ENCODE measurements at regions of chr2 and their contacts with region 1.

Region 1: GRCh38 chr2:102753563-102754159 is 8.2 kb upstream of the TMEM182 start:
- DNase-seq: peak in 4 of 9 experiments; percentile 25 to 57 (median 32)
- ATAC-seq: peak; percentile 38
- H3K4me3 ChIP-seq: no peak overlapping the region
- H3K4me3 Mint-ChIP-seq: no peak overlapping the region
- H3K27ac ChIP-seq: no peak overlapping the region
- H3K27ac Mint-ChIP-seq: no peak overlapping the region
- H3K4me1 ChIP-seq: no peaks in the 10 kb centered on the region
- H3K4me1 Mint-ChIP-seq: no peaks in the 10 kb centered on the region
- H3K27me3 ChIP-seq: no peaks in the 10 kb centered on the region
- H3K27me3 Mint-ChIP-seq: no peaks in the 10 kb centered on the region
- CTCF ChIP-seq: peak; percentile 98

Region 2: GRCh38 chr2:102301867-102302362 is 451.7 kb before region 1 on chr2:
- CTCF ChIA-PET with region 1: no interaction called
- POLR2A ChIA-PET with region 1: no interaction called
- intact Hi-C with region 1: no loop called
- DNase-seq: peak; percentile 5 to 79 (median 41)
- ATAC-seq: peak; percentile 85
- H3K4me3 ChIP-seq: no peak overlapping the region
- H3K4me3 Mint-ChIP-seq: peak overlapping the region; percentile 38
- H3K27ac ChIP-seq: no peak overlapping the region
- H3K27ac Mint-ChIP-seq: no peak overlapping the region
- H3K4me1 ChIP-seq: peaks cover 6% of the 10 kb centered on the region
- H3K4me1 Mint-ChIP-seq: peaks cover 12% of the 10 kb centered on the region
- H3K27me3 ChIP-seq: no peaks in the 10 kb centered on the region
- H3K27me3 Mint-ChIP-seq: no peaks in the 10 kb centered on the region
- CTCF ChIP-seq: peak; percentile 50

Region 3: DNA sequence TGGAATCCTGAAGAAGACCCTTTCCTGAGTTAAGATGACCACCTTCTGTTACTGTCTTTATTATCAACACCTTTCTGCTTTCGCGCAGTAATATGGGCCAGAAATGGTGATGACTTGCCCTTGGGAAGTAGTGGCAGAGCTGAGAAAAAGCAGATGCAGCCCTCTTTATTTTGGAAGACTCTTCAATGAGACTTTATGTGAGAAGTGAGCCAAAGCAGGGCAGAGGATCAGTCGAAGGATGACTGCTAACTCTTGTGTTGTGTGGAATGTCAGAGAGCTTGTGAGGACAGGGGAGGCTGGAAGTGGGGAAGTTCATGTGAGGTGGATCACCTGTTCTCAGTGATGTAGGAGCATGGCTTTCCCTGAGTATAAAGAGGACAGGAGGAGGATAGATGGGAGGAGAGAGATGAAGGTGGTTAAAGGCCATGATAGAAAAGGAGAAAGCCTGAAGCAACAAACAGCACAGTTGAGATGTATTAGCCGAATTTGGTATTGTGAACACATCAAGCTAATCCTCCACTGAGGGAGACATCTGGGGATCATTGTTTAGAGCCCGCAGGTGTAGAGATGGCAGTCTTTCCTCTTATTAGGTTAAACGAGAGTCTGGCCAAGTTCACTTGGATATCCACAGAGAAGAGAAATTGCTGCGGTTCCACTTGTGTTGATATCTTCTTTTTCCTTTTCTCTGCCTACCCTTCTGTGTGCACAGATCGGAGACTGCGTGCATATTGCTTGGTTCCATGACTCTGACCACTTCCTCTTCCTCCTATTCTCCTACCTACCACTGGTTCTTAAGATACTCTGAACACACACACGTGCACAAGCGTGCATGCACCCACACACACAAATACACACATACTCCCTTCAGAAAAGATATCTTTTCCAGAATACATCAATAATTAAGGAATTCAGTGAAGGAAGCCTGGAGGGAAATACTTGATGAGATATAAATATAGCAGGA is 66.9 kb before region 1 on chr2:
- CTCF ChIA-PET with region 1: no interaction called
- POLR2A ChIA-PET with region 1: no interaction called
- intact Hi-C with region 1: no loop called
- DNase-seq: peak in 2 of 9 experiments; percentile 13 to 49
- ATAC-seq: no peak
- H3K4me3 ChIP-seq: no peak overlapping the region
- H3K4me3 Mint-ChIP-seq: no peak overlapping the region
- H3K27ac ChIP-seq: no peak overlapping the region
- H3K27ac Mint-ChIP-seq: no peak overlapping the region
- H3K4me1 ChIP-seq: peaks cover 10% of the 10 kb centered on the region
- H3K4me1 Mint-ChIP-seq: no peaks in the 10 kb centered on the region
- H3K27me3 ChIP-seq: no peaks in the 10 kb centered on the region
- H3K27me3 Mint-ChIP-seq: peaks cover 2% of the 10 kb centered on the region
- CTCF ChIP-seq: no peak

Region 4: GRCh38 chr2:102736410-102737409 is 17.0 kb before region 1 on chr2:
- CTCF ChIA-PET with region 1: interaction called, 16 read pairs
- POLR2A ChIA-PET with region 1: no interaction called
- intact Hi-C with region 1: no loop called
- DNase-seq: peak; percentile 64 to 90 (median 83)
- ATAC-seq: peak; percentile 90
- H3K4me3 ChIP-seq: peak overlapping the region; percentile 83 to 94
- H3K4me3 Mint-ChIP-seq: peak overlapping the region; percentile 93
- H3K27ac ChIP-seq: peak overlapping the region; percentile 51 to 61
- H3K27ac Mint-ChIP-seq: peak overlapping the region; percentile 89
- H3K4me1 ChIP-seq: peaks cover 23% of the 10 kb centered on the region
- H3K4me1 Mint-ChIP-seq: peaks cover 44% of the 10 kb centered on the region
- H3K27me3 ChIP-seq: no peaks in the 10 kb centered on the region
- H3K27me3 Mint-ChIP-seq: no peaks in the 10 kb centered on the region
- CTCF ChIP-seq: no peak

Region 5: DNA sequence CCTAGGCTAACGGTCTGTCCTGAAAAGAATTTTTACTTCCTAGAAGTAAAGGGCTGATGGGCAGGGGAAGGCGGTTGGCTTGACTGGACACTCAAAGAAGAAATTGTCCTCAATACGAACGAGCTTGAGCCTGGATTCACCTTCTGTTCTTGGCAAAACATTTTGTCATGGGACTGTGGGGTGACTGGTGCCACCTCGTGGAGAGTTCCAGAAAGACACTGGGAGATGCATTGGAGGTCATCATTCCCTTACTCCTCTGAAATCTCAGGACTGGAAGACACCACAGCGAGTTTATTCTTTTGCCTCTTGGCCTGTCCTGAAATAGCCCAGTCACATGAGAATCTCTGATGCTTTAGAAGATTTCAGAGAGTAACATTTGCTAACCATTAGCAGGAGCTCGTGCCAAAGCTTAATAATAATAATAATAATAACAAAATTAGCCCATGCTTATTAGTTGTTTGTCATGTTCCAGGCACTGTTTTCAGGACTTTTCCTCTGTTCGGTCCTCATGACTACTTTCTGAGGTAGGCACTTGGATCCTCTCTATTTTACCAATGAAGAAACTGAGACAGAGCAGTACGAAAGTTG is 52.7 kb after region 1 on chr2:
- CTCF ChIA-PET with region 1: interaction called, 11 read pairs
- POLR2A ChIA-PET with region 1: no interaction called
- intact Hi-C with region 1: loop called in 1 of 2 experiments (anchors 1 kb)
- DNase-seq: peak in 5 of 9 experiments; percentile 8 to 39 (median 22)
- ATAC-seq: no peak
- H3K4me3 ChIP-seq: no peak overlapping the region
- H3K4me3 Mint-ChIP-seq: no peak overlapping the region
- H3K27ac ChIP-seq: no peak overlapping the region
- H3K27ac Mint-ChIP-seq: no peak overlapping the region
- H3K4me1 ChIP-seq: peaks cover 14% of the 10 kb centered on the region
- H3K4me1 Mint-ChIP-seq: peaks cover 15% of the 10 kb centered on the region
- H3K27me3 ChIP-seq: no peaks in the 10 kb centered on the region
- H3K27me3 Mint-ChIP-seq: no peaks in the 10 kb centered on the region
- CTCF ChIP-seq: peak; percentile 48